ENCODE measurements at regions of chr4 and their contacts with region 1.

Region 1: GRCh38 chr4:40916880-40917279 is 167.1 kb downstream of the NSUN7 start:
- DNase-seq: peak in 3 of 5 donors; percentile 35 to 47 (median 39)
- ATAC-seq: peak; percentile 15 to 60 (median 49)
- H3K4me3 ChIP-seq: no peak overlapping the region
- H3K27ac ChIP-seq: no peak overlapping the region
- H3K4me1 ChIP-seq: peaks cover 4 to 40% (median 23%) of the 10 kb centered on the region in 12 donors
- H3K27me3 ChIP-seq: no peaks in the 10 kb centered on the region
- CTCF ChIP-seq: peak in 11 of 12 donors; percentile 10 to 54 (median 34)
- POLR2A ChIP-seq: no peak

Region 2: DNA sequence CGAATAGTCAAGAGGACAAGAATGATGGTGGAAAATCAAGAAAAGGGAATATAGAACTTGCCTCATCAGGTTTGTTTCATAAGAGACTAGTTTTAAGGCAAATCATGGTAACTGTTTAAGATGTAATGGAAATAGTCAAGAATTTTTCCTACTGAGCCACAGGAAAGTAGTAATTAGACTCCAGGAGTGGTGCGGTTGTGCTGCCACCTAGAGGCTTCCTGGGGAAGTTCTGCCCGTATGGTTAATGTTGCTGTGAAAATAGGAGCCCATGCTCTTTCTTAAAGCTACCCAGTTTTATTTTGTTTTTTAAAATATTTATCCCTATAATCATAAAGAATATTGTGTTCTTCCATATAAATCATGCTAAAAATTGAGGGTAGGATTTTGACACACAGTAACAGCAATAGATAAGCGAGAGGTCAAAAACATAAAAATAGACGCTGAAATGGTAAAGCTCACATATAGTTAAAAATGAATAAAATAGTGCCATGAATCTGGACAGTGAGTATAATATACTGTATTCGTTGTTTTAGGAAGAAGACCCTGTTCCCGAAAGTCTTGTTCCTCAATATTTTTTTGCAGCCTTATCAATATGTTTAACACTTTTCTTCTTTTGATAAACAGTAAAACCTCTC is 744.7 kb after region 1 on chr4:
- intact Hi-C with region 1: loop called in 2 of 10 experiments (anchors 10 kb)
- DNase-seq: peak in 3 of 5 donors; percentile 50 to 59 (median 51)
- ATAC-seq: peak in 3 of 4 donors; percentile 46 to 55 (median 47)
- H3K4me3 ChIP-seq: no peak overlapping the region
- H3K27ac ChIP-seq: peak overlapping the region in 1 of 12 donors; percentile 9
- H3K4me1 ChIP-seq: peaks cover 0 to 23% (median 10%) of the 10 kb centered on the region in 12 donors
- H3K27me3 ChIP-seq: no peaks in the 10 kb centered on the region
- CTCF ChIP-seq: peak; percentile 94 to 99 (median 97)
- POLR2A ChIP-seq: no peak

Measured in heart left ventricle (tissue), 16 donors.